ENCODE measurements at regions of chr6 and their contacts with region 1.

Region 1: DNA sequence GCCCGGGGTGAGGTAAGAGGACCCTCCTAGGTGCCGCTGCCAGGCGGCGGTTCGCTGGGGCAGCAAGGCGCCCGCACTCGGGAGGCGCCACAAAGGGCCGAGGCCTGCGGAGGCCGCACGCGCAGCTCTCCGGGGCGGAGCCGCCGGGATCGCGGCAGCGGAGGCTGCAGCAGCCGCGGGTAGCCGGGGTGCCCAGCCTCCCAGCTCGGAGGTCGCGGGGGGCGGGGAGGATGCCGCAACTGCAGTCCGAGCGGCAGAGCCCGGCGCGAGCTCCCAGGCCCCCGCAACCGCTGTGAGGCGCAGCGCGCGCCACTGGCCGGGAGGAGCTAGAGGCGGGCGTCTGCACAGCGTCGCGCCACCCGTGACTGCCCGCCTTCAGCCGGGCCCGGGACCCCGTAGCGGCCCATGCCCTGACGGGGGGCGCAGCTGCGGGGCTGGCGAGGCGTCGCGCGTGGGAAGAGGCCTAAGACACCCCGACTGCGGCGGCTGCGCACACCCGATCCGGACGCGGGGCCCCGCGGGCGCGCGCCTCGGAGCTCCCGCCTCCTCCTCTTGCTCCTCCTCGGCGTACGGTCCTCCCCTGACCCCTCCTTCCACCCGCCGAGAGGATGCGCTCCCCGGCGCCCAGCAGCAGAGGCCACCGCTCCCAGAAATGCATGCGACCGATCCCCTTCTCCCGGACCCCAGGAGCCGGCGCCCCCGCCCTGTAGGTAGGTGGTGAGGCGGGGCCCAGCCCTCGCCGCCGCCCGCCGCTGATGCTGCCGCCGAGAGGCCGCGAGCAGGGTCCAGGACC is at the start of gene NCOA7:
- DNase-seq: no peak
- H3K4me3 ChIP-seq: peak within 1 kb of the TSS; percentile 79
- H3K27me3 ChIP-seq: no peaks in the 10 kb centered on the region
- CTCF ChIP-seq: no peak
- polyA plus RNA-seq, gene NCOA7: 27.2 and 29.7 TPM in 2 replicates

Region 2: GRCh38 chr6:125779924-125780539 is 10.5 kb before region 1 on chr6:
- CTCF ChIA-PET with region 1: interaction called, 13 read pairs
- POLR2A ChIA-PET with region 1: interaction called, 6 read pairs
- DNase-seq: peak; percentile 80
- H3K4me3 ChIP-seq: peak overlapping the region; percentile 62
- H3K27me3 ChIP-seq: 0 out of 2 replicates have a peak, but pooled peaks cover 5% of the 10 kb centered on the region
- CTCF ChIP-seq: peak; percentile 21; the same call in 1 of the 2 replicates

Region 3: DNA sequence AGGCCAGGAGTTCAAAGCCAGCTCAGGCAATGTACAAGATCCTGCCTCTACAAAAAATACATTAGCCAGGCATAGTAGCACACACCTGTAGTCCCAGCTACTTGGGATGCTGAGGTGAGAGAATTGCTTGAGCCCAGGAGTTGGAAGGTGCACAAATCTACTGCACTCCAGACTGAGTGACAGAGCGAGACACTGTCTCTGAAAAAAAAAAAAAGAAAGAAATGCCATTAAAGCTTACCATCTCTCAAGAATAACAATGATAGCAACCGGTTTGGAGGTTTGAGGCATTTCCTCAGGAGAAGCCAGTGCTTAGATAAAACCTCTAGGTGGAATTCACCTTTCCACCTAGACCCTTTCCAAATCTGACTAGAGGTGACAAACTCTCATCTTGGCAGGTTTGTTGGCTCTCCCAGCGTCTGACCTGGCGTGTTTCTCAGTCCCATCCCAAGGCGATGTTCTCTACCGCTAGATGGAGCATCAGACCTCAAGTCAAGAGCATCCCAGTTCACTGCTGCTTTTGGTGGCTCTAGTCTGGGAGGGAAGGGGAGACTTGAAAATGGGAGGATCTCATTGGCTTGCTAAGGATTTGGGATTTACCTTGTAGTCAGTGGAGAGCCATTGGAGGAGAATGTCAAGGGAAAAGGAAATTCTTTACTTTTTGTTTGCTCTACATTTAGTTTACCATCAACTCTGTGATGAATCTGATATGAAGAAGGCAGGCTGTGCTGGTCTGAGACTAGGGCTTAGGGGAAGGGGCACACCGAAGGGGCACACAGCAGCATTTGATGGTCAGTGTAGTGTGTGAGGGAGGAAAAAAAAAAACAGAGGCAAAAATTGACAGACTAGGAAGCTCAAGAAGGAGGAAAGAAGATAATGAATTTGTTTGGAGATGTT is 68.1 kb after region 1 on chr6:
- CTCF ChIA-PET with region 1: interaction called, 19 read pairs
- POLR2A ChIA-PET with region 1: no interaction called
- DNase-seq: no peak
- H3K4me3 ChIP-seq: no peak overlapping the region
- H3K27me3 ChIP-seq: no peaks in the 10 kb centered on the region
- CTCF ChIP-seq: peak; percentile 90

Region 4: GRCh38 chr6:125947586-125947985 is 157.0 kb after region 1 on chr6:
- CTCF ChIA-PET with region 1: interaction called, 49 read pairs
- POLR2A ChIA-PET with region 1: interaction called, 4 read pairs
- DNase-seq: no peak
- H3K4me3 ChIP-seq: no peak overlapping the region
- H3K27me3 ChIP-seq: no peaks in the 10 kb centered on the region
- CTCF ChIP-seq: no peak

Region 5: GRCh38 chr6:125974214-125974866 is 183.8 kb after region 1 on chr6:
- CTCF ChIA-PET with region 1: interaction called, 12 read pairs
- POLR2A ChIA-PET with region 1: no interaction called
- DNase-seq: no peak
- H3K4me3 ChIP-seq: no peak overlapping the region
- H3K27me3 ChIP-seq: no peaks in the 10 kb centered on the region
- CTCF ChIP-seq: peak; percentile 42; the same call in 1 of the 2 replicates

Measured in BJ (cell line).